Right ventricle myocardium inferior (tissue), 1 donor: ENCODE measurements at regions of chrX and their contacts with region 1.

Region 1: DNA sequence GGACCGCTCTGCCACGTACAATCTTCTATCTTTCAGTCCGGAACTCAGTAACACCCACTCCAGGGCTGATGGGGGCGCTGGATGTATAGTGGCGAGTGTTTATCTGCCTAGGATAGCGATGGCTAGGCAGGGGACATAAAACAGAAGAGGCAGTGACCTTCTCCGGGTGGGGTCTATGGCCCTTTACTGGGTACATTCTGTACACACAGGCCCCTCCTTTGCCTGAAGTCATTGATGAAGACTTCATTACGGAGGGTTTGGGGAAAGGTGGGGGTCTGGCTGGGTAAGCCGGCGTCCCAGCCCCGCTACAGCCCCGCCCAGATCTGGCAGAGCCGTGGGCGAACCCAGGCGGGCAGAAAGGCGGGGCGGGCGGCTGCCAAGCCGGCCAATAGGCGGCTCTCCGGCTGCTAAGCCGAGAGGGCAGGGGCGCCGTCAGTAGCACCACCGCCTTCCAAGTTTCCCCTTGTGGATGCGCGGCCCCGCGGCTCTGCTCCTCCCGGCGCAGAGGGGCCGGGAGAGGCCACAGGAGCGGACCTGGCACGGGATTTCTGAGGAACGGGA is at the start of gene CHST7:
- DNase-seq: peak; percentile 86
- ATAC-seq: peak; percentile 89
- total RNA-seq, gene CHST7: 15.1 TPM

Region 2: DNA sequence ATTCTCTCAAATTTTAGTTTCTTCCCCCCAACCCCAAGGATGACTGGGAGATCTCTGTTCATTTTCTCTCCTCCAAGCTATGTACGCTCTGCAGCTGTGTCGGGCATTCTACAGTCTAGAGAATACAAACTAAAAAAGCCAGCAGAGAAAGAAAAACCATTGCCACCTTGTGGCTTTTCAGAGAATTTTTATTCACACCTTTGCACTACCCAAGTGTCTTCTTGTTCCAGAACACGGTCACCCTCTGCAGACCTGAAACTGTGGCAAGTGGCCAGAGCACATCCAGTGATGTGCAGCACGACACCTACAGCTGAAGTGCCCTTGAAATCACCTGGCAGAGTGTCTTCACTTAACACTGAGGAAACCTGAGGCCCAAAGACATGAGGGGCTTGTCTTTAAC is 68.7 kb after region 1 on chrX:
- intact Hi-C with region 1: loop called (anchors 2 kb)
- DNase-seq: no peak
- ATAC-seq: peak; percentile 85

Region 3: GRCh38 chrX:46770817-46771163 is 197.4 kb after region 1 on chrX:
- intact Hi-C with region 1: no loop called
- DNase-seq: no peak
- ATAC-seq: no peak